Posterior vena cava (tissue), 2 donors: ENCODE measurements at regions of chr6 and their contacts with region 1.

Region 1: GRCh38 chr6:63764318-63764916 is 128.8 kb downstream of the PHF3 start:
- DNase-seq: no peak

Region 2: DNA sequence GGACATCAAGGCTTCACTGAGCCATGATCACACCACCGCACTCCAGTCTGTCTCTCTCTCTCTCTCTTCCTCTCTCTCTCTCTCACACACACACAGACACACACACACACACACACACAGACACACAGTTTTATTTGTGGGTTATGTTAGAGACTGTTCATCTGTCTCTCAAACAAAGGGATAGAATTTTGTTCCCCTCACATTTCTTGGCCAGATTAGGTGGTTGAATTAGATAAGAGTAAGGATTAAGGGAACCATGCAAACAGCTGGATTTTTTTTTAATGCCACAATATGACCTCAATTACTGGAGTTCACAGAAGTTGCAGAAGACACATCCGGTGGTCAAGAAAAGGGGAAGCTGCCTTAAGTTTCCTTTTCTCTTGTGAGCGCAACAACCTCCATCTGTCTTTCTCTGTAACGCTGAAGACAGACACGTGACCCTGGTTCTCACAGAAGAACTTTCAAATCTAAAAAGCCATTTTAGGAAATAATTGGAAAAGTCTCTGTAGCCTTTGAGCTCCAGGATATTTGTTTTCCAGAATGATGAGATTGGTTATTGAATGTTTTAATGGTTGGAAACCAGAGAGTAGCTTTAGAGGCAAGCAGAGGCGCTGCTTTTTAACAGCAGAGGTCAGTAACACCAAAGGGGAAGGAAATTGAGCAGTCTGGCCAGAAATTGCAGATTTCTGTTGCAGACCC is 411.7 kb before region 1 on chr6:
- intact Hi-C with region 1: loop called in 1 of 2 experiments (anchors 5 kb)
- DNase-seq: no peak

Region 3: DNA sequence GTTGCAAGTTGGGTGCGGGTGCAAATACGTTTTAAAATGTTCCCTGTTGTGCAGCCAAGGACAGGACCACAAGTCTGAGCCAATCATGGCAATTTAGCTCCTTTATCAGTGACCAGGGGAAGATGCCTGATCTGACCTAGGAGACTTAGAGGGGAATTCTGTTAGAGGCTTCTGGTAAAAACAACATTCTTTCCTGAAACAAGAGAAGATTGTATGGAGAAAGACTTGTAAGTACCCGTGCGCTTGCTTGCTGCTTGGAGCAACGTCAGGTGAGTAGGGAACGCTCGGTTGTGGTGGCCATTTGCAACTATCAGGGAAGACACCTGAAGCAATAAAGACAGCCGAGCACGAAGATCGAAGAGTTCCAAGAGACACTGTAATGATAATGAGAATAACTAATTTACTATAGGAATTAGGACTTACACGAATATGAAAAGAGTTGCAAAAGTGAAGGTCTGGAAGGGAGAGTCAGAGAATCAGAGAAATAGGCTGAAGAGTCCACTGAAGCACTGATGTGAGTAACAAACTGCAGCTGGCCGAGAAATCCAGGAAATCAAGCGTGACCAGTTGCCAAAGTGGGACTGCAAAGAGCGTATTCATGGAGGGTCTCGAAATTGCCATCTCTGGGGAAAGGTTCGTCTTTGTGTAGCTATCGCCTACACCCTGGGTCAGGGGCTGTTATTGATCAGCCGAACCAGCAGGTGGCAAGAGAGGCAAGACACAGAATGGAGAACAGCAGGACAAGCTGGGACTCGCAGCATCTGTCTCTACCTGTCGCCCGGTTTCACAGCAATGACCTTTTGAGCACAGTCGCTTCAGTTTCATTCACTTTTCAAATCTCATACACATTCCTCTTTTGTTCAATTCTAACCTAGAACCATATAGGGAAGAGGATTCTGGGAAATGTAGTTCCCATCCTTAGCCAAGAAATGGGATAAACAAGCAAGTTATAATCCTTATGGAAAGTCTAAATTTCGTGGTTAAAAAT is 166.1 kb before region 1 on chr6:
- intact Hi-C with region 1: loop called (anchors 5 kb)
- DNase-seq: peak; percentile 83

Region 4: GRCh38 chr6:63882224-63882623 is 117.8 kb after region 1 on chr6:
- intact Hi-C with region 1: no loop called
- DNase-seq: no peak